ENCODE measurements at regions of chr1 and their contacts with region 1.

Region 1: DNA sequence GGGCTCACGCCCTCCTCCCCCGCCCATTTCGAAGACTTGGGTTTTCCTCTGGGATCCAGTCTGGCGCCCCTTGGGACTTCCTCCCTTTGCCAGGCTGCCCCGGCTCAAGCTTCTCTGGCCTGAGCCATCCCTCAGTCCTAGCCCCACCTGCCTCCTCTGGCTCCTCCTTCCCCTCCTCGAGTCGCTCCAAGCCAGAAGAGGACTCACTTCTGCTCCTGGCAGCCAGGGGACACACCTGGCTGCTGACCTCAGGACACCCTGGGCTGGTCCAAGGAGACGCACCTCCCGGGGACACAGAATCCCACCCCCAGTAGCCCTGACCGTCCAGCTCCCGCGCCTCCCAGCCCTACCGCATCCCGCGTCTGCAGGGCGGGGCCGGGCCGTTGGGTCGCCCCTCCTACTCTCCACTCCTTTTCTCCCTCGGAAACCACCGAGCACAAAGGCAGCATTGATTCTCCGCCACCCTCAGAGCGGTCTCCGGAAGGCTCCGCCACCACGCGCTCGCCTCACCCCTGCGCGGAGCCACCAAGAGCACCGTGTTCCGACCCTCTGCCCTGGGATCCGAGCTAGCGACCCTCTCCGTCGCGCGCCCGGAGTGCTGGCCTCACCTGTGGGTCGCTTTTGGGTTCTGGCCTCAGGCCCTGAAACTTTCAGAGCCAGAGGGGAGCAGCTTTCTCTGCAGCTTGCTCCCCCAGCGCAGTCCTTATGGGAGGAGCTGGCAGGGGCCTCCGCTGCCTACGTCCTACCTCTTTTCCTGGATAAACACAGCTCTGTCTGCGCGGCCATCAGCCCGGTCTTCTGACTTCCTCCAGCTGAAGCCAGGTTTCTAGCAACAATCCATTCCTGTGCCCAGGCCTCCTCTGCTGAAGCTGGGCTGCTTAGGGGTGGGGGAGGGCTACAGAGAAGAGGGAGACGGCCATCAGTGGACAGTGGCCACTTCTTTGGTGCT is at the start of gene C2CD4D:
- DNase-seq: peak; percentile 65 to 88
- H3K4me3 ChIP-seq: peak within 1 kb of the TSS; percentile 43 to 69 (median 54)
- H3K27ac ChIP-seq: peak within 1 kb of the TSS; percentile 85
- H3K4me1 ChIP-seq: peaks cover 4 to 17% (median 9%) of the 10 kb centered on the region in 4 experiments
- H3K27me3 ChIP-seq: peaks cover 10 to 24% (median 21%) of the 10 kb centered on the region in 4 experiments
- CTCF ChIP-seq: peak; percentile 8 to 24 (median 15); a peak in 3 of 4 replicates
- EP300 ChIP-seq: no peak
- POLR2A ChIP-seq: peak; percentile 85 to 91
- RAD21 ChIP-seq: peak in 1 of 2 experiments; percentile 10; a peak in 1 of 4 replicates
- total RNA-seq, gene C2CD4D: 0.54 and 0.71 TPM in 2 replicates

Region 2: GRCh38 chr1:151693076-151693651 is 146.6 kb before region 1 on chr1:
- CTCF ChIA-PET with region 1: interaction called, 10 read pairs
- POLR2A ChIA-PET with region 1: interaction called, 3 read pairs
- DNase-seq: no peak
- H3K4me3 ChIP-seq: no peak overlapping the region
- H3K27ac ChIP-seq: no peak overlapping the region
- H3K4me1 ChIP-seq: no peaks in the 10 kb centered on the region
- H3K27me3 ChIP-seq: no peaks in the 10 kb centered on the region
- CTCF ChIP-seq: peak in 2 of 3 experiments; percentile 82 to 88; a peak in 3 of 4 replicates
- EP300 ChIP-seq: no peak
- POLR2A ChIP-seq: no peak
- RAD21 ChIP-seq: peak; percentile 85 to 93

Region 3: DNA sequence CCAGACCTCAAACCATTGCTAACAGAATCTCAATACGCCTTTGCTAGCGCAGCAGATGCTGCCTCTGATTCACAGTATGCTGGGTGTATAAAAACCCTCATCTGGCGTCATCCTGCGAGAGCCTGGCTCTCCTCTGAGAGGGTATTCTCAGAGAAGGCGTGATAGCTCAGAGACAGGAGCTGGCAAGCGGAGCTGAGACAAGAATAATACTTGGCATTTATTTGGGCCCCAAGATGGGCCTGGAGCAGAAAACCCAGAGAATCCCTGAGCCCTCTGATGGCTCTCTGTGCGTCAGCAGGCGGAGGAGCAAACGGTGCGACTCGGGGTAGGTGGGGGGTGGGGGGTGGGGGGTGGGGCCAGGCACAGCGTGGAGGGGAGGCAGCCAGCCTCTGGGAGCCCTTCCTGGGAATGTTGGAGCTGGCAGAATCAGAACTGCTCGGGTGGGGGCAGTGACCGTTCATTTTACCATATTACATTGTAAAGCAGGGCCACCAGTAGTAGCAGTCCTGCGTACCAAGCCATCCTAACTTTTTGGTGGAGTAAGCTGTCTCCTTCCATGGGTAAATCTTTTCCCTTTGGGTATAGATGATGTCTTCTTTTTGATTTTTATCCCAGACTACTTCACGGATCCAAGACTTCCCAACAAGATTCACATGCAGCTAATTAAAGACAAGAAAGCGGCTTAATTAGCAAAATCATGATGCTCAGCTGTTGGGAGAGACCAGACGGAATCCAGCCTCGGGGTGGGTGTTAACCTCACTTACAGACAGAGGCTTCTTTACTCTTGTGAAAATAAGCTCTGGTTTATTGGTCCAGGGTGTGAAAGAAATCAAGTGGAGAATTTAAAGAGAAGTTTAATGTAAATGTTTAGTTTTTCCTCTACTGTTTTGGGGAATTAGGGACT is 111.3 kb before region 1 on chr1:
- CTCF ChIA-PET with region 1: interaction called, 26 read pairs
- POLR2A ChIA-PET with region 1: interaction called, 3 read pairs
- DNase-seq: peak in 1 of 2 experiments; percentile 53
- H3K4me3 ChIP-seq: peak overlapping the region in 1 of 4 experiments; percentile 39; a peak in 2 of 8 replicates
- H3K27ac ChIP-seq: no peak overlapping the region
- H3K4me1 ChIP-seq: peaks cover 3 to 11% (median 7%) of the 10 kb centered on the region in 4 experiments
- H3K27me3 ChIP-seq: no peaks in the 10 kb centered on the region; a peak in 2 of 7 replicates
- CTCF ChIP-seq: no peak
- EP300 ChIP-seq: no peak
- POLR2A ChIP-seq: no peak
- RAD21 ChIP-seq: no peak; a peak in 1 of 4 replicates

Region 4: DNA sequence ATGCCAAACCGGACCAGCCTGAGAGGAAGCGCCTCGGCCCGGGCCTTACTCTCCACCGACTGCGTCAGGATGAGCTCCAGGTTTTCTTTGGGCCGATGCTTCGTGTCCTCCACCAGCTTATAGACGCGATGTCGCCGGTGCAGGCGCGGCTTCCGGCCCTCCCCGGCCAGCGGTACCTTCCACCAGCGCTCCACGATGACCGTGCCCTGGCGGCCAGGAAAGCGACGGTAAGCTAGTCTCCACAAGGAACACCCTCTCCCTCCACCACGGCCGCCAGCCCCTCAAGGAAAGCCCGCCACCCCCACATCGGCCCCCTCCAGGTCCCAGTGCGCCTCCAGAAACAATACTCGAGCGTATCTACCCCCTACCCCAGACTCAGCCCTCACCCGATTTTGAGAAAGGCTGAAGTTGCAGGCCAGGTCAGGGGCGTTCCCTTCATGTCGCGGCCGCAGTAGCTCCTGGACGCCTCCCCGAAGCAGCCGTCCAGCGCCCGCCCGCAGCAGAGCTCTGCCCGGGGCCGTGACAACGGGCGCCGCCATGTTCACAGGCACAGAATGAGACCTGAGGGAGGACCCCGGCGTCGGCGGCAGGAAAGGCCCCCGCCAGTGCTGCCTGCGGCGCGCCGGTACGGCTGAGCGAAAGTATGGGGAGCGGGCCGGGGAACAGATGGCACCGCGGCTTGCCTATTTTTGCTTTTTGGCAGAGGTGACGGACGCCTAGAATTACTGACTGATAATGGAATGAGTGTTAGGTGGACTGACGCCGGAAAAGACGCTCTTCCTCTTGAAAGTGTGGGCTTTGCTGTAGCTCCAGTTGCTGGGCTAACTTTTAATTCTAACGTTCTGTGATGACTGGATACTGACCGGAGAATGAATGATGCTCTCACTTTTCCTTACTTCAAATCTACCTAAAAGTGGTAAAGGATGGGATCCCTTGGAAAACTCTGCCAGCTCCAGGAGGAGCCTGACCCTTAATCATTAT is 76.5 kb before region 1 on chr1 and contains the start of gene MRPL9:
- CTCF ChIA-PET with region 1: interaction called, 5 read pairs
- POLR2A ChIA-PET with region 1: interaction called, 15 read pairs
- DNase-seq: peak; percentile 36 to 91
- H3K4me3 ChIP-seq: peak within 1 kb of the TSS; percentile 88 to 96 (median 92)
- H3K27ac ChIP-seq: peak within 1 kb of the TSS; percentile 85
- H3K4me1 ChIP-seq: 0 out of 7 replicates have a peak, but pooled peaks cover 0 to 1% (median 0%) of the 10 kb centered on the region in 4 experiments
- H3K27me3 ChIP-seq: no peaks in the 10 kb centered on the region
- CTCF ChIP-seq: no peak
- EP300 ChIP-seq: no peak
- POLR2A ChIP-seq: peak; percentile 88 to 92
- RAD21 ChIP-seq: no peak; a peak in 1 of 4 replicates
- total RNA-seq, gene MRPL9: 96.4 and 113 TPM in 2 replicates

Region 5: DNA sequence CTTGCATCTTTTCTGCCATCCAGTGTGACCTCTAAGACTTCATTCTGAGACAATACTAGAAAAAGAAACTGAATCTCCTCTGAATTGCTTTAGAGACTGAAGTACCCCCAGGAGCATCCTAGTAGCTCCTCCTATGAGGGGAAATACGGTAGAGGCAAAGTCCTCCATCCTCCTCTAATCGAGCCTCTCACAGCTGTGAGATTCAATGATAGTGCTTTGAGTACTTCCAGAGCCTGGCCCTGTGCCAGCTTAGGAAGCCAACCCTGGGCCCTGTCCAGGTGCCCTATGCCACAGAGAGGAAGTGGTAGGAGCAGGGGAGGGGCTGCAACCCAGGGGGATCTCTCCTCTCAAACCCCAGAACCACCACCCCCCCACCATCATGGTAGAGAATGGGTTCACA is 18.8 kb before region 1 on chr1:
- CTCF ChIA-PET with region 1: interaction called, 22 read pairs
- POLR2A ChIA-PET with region 1: interaction called, 20 read pairs
- DNase-seq: no peak
- H3K4me3 ChIP-seq: no peak overlapping the region
- H3K27ac ChIP-seq: no peak overlapping the region
- H3K4me1 ChIP-seq: peaks cover 0 to 14% (median 10%) of the 10 kb centered on the region in 4 experiments; a peak in 6 of 7 replicates
- H3K27me3 ChIP-seq: no peaks in the 10 kb centered on the region
- CTCF ChIP-seq: no peak
- EP300 ChIP-seq: no peak
- POLR2A ChIP-seq: no peak
- RAD21 ChIP-seq: no peak

Region 6: DNA sequence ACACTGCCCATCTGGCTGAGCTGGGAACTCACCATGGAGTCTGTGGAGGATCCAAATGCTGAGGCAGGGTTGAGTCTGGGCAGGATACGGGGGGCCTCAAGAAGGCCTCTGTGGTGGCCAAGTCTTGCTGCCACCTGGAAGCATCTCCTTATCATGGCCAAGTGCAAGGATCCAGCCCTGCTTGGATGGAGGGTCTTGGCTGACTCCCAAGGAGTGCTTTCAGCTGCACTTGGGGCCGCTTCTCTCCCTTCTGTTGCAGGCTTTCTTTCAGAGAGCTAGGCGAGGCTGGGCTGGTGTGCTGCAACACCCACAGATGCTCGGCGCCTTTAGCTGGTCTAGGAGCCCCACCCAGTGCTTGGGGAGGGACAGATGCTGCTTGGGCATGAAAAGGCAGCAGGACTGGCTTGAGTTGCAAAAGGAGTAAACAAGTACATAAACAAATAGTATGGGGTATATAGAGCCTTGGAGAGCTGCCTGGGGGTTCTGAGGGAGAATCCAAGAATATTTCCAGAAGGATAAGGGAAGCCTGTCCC is 13.7 kb after region 1 on chr1 and contains the start of gene THEM5:
- CTCF ChIA-PET with region 1: interaction called, 3 read pairs
- POLR2A ChIA-PET with region 1: interaction called, 19 read pairs
- DNase-seq: no peak
- H3K4me3 ChIP-seq: no peak within 1 kb of the TSS
- H3K27ac ChIP-seq: no peak within 1 kb of the TSS
- H3K4me1 ChIP-seq: no peaks in the 10 kb centered on the region
- H3K27me3 ChIP-seq: peaks cover 3 to 14% (median 11%) of the 10 kb centered on the region in 4 experiments
- CTCF ChIP-seq: no peak
- EP300 ChIP-seq: no peak
- POLR2A ChIP-seq: no peak
- RAD21 ChIP-seq: peak in 1 of 2 experiments; percentile 27; a peak in 1 of 4 replicates
- total RNA-seq, gene THEM5: not detected in 2 replicates

Region 7: GRCh38 chr1:151946365-151946761 is 106.6 kb after region 1 on chr1:
- CTCF ChIA-PET with region 1: no interaction called
- POLR2A ChIA-PET with region 1: no interaction called
- DNase-seq: no peak
- H3K4me3 ChIP-seq: no peak overlapping the region
- H3K27ac ChIP-seq: no peak overlapping the region
- H3K4me1 ChIP-seq: peaks cover 0 to 3% (median 0%) of the 10 kb centered on the region in 4 experiments; a peak in 2 of 7 replicates
- H3K27me3 ChIP-seq: no peaks in the 10 kb centered on the region
- CTCF ChIP-seq: no peak
- EP300 ChIP-seq: no peak
- POLR2A ChIP-seq: no peak
- RAD21 ChIP-seq: no peak